Ovary (tissue), 10 donors: ENCODE measurements at regions of chr6 and their contacts with region 1.

Region 1: GRCh38 chr6:18323935-18324705 is 59.8 kb upstream of the DEK start:
- DNase-seq: no peak
- H3K4me3 ChIP-seq: no peak overlapping the region
- H3K27ac ChIP-seq: no peak overlapping the region
- H3K4me1 ChIP-seq: no peaks in the 10 kb centered on the region
- H3K27me3 ChIP-seq: no peaks in the 10 kb centered on the region
- CTCF ChIP-seq: peak in 1 of 3 donors; percentile 28
- EP300 ChIP-seq: no peak
- POLR2A ChIP-seq: no peak

Region 2: GRCh38 chr6:18491308-18492045 is 167.4 kb after region 1 on chr6:
- intact Hi-C with region 1: loop called in 1 of 4 experiments (anchors 10 kb)
- DNase-seq: no peak
- H3K4me3 ChIP-seq: no peak overlapping the region
- H3K27ac ChIP-seq: no peak overlapping the region
- H3K4me1 ChIP-seq: no peaks in the 10 kb centered on the region
- H3K27me3 ChIP-seq: no peaks in the 10 kb centered on the region
- CTCF ChIP-seq: no peak
- EP300 ChIP-seq: no peak
- POLR2A ChIP-seq: no peak

Region 3: GRCh38 chr6:18503593-18504231 is 179.6 kb after region 1 on chr6:
- intact Hi-C with region 1: loop called (anchors 5 to 10 kb)
- DNase-seq: peak in 3 of 5 donors; percentile 28 to 50 (median 30)
- H3K4me3 ChIP-seq: no peak overlapping the region
- H3K27ac ChIP-seq: no peak overlapping the region
- H3K4me1 ChIP-seq: no peaks in the 10 kb centered on the region
- H3K27me3 ChIP-seq: no peaks in the 10 kb centered on the region
- CTCF ChIP-seq: peak; percentile 37 to 55 (median 49)
- EP300 ChIP-seq: no peak
- POLR2A ChIP-seq: no peak